ENCODE measurements at regions of chr5 and their contacts with region 1.

Region 1: GRCh38 chr5:33457126-33457525 is 16.4 kb downstream of the TARS1 start:
- DNase-seq: no peak
- ATAC-seq: no peak
- H3K4me3 Mint-ChIP-seq: no peak overlapping the region
- H3K27ac Mint-ChIP-seq: no peak overlapping the region
- H3K4me1 Mint-ChIP-seq: peaks cover 6% of the 10 kb centered on the region
- H3K27me3 Mint-ChIP-seq: no peaks in the 10 kb centered on the region

Region 2: DNA sequence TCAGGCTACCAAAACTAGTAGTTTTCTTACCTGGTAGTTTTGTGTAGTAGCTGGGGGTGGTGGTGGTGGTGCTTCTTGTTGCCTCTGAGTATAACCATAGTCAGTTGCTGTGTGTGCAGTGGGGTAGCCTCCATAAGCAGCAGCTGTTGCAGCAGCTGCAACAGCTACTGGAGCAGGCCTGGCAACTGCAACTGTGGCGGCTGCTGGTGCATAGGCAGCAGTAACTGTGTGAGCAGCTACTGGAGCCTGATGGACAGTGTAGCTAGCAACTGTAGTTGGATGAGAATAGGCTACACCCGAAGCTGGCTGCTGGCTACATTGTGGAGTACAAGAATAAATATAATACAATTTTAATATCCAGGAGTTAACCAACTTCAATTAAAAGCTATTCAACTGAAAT is 1037.3 kb before region 1 on chr5:
- CTCF ChIA-PET with region 1: no interaction called
- POLR2A ChIA-PET with region 1: no interaction called
- intact Hi-C with region 1: loop called in 1 of 2 experiments (anchors 10 kb)
- DNase-seq: no peak
- ATAC-seq: no peak
- H3K4me3 Mint-ChIP-seq: no peak overlapping the region
- H3K27ac Mint-ChIP-seq: no peak overlapping the region
- H3K4me1 Mint-ChIP-seq: peaks cover 25% of the 10 kb centered on the region
- H3K27me3 Mint-ChIP-seq: no peaks in the 10 kb centered on the region

Region 3: DNA sequence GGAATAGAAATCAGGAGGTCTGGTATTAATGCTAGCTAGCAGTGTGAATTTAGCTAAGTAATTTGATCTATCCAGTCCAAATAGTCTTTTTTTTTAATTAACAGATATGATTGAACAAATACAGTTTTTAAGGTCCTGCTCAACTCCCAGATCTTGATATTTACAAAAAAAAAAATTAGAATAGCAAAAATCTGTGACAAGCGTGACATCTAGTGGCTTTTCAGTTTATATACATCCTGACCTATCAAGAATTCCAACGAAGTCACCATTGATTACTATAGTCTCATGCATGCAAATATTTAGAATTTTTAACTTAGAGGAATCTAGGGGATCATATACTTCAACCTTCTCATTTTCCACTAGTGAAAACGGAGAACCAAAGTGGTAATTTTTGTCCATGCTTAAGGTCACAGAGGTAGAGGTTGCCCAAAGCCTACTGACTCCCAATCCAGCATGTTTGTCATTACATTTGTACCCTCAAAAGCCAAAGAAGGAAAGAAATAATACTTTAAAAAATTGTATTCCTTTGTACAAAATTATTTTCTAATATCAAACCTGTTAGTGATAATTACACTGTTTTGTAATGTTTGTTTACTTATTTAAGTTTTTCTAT is 34.0 kb before region 1 on chr5:
- CTCF ChIA-PET with region 1: no interaction called
- POLR2A ChIA-PET with region 1: no interaction called
- intact Hi-C with region 1: no loop called
- DNase-seq: no peak
- ATAC-seq: no peak
- H3K4me3 Mint-ChIP-seq: no peak overlapping the region
- H3K27ac Mint-ChIP-seq: no peak overlapping the region
- H3K4me1 Mint-ChIP-seq: no peaks in the 10 kb centered on the region
- H3K27me3 Mint-ChIP-seq: peaks cover 12% of the 10 kb centered on the region

Region 4: GRCh38 chr5:33468811-33469435 is 11.8 kb after region 1 on chr5:
- CTCF ChIA-PET with region 1: interaction called, 6 read pairs
- POLR2A ChIA-PET with region 1: interaction called, 3 read pairs
- intact Hi-C with region 1: loop called in 1 of 2 experiments (anchors 2 kb)
- DNase-seq: no peak
- ATAC-seq: no peak
- H3K4me3 Mint-ChIP-seq: no peak overlapping the region
- H3K27ac Mint-ChIP-seq: no peak overlapping the region
- H3K4me1 Mint-ChIP-seq: no peaks in the 10 kb centered on the region
- H3K27me3 Mint-ChIP-seq: no peaks in the 10 kb centered on the region

Measured in activated CD4-positive, alpha-beta T cell treated with anti-CD3 and anti-CD28 coated beads for 36 hours (primary cell).